GM10248 (cell line): ENCODE measurements at regions of chr3 and their contacts with region 1.

Region 1: DNA sequence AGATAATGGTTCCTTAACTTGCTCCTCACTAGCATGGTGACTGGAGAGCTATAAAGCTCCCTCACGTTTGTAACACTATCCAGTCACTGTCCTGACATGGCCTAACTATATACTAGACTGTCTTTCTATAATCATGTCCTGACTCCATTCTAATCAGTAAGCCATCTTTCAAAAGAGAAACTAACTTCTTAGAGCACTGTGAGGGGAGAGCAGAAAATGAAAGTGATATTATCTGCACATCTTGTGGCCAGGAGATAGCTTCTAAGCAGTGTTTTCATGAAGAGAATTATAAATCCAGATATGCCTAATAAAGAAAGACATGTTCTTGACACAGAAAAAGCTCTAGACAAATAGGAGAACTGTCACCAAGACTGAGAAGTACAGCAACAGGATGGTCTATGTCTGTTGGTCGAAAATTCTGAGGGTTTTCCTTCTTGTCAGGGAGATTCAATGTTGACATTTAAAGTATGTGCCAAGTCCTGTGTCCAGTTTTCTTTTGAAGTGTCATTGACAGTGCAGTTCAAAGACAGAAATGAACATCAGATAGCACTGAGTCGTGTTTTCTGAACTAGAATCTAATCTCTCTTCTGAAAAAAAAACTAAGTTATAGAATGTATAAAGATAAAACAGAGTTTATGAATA is 230.6 kb upstream of the PEX5L start:
- DNase-seq: peak; percentile 28
- CTCF ChIP-seq: no peak

Region 2: GRCh38 chr3:180250169-180250568 is 17.2 kb before region 1 on chr3:
- CTCF ChIA-PET with region 1: no interaction called
- POLR2A ChIA-PET with region 1: no interaction called
- DNase-seq: no peak
- CTCF ChIP-seq: no peak

Region 3: DNA sequence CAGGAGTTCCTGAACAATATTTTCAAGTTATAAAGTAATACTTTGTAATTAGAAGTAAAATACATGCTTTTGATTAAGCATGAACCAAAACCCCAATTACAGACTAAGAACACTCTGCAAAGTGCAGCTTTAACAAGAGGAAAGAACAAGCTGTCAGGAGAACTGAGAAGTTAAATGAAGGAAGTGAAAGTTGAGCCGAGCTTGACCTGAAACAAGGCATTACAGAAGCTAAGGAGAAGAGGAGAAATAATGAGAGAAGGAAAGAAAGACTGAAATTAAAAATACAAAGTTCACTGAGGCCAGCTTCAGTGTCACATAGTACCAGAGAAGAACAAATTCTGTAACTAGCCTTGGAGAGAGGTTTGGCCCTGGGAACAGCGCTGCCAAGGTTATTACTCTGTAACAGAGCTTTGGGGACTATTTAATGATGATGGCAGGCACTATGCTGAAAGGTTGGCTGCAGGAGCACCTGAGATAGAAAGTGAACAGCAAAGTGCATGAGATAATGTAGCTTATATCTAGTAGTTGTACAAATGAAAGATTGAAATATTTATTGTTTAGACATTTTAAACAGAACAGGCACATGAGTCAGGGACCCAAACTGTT is 11.4 kb after region 1 on chr3:
- CTCF ChIA-PET with region 1: interaction called, 14 read pairs
- POLR2A ChIA-PET with region 1: no interaction called
- DNase-seq: peak; percentile 38
- CTCF ChIP-seq: no peak

Region 4: GRCh38 chr3:180329187-180329586 is 61.9 kb after region 1 on chr3:
- CTCF ChIA-PET with region 1: no interaction called
- POLR2A ChIA-PET with region 1: no interaction called
- DNase-seq: peak; percentile 36
- CTCF ChIP-seq: peak; percentile 9